ENCODE measurements at regions of chr4 and their contacts with region 1.

Region 1: GRCh38 chr4:37873386-37873785 is 17.5 kb upstream of the TBC1D1 start:
- DNase-seq: no peak
- H3K4me3 Mint-ChIP-seq: no peak overlapping the region
- H3K27ac Mint-ChIP-seq: no peak overlapping the region
- H3K4me1 Mint-ChIP-seq: peaks cover 14% of the 10 kb centered on the region
- H3K27me3 Mint-ChIP-seq: no peaks in the 10 kb centered on the region

Region 2: DNA sequence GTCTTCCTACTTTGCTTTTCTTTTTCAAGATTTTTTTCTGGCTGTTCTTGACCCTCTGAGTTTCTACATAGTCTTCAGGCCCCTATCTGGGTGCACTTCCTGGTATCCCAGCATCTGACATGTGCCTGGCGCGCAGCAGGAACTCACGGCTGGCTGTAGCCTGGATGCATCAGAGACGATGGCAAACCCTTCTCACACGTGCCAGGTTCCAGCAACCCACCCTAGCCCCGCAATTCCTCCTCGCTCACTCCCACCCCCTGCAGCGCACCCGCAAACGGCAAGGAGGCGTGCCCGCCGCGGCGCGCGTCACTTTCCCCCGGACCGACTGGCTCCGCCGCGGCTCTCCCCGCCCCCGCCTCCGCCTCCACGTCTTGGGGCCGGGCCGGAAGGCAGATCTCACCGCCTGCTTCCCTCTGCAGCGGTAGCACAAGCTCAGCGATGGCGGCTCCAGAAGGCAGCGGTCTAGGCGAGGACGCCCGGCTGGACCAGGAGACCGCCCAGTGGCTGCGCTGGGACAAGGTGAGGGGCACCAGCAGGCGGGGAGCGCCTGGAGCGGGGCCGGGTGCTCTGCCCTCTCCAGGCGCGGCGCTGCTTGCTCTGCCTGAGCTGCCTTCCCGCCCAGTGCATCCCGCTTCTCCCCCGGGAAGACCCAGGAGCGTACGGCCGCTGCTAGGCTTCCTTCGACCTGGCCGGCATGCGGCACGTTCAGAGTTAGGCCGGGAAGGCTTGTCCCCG is 46.9 kb before region 1 on chr4 and contains the start of gene PGM2:
- intact Hi-C with region 1: loop called (anchors 5 kb)
- DNase-seq: peak; percentile 98
- H3K4me3 Mint-ChIP-seq: peak within 1 kb of the TSS; percentile 95
- H3K27ac Mint-ChIP-seq: peak within 1 kb of the TSS; percentile 91
- H3K4me1 Mint-ChIP-seq: peaks cover 32% of the 10 kb centered on the region
- H3K27me3 Mint-ChIP-seq: peaks cover 1% of the 10 kb centered on the region
- total RNA-seq, gene PGM2: 53.4 and 55.1 TPM in 2 replicates

Region 3: GRCh38 chr4:38034986-38035882 is 161.8 kb after region 1 on chr4:
- intact Hi-C with region 1: no loop called
- DNase-seq: peak; percentile 82
- H3K4me3 Mint-ChIP-seq: no peak overlapping the region
- H3K27ac Mint-ChIP-seq: no peak overlapping the region
- H3K4me1 Mint-ChIP-seq: no peaks in the 10 kb centered on the region
- H3K27me3 Mint-ChIP-seq: no peaks in the 10 kb centered on the region

Region 4: GRCh38 chr4:38105475-38106220 is 232.3 kb after region 1 on chr4:
- intact Hi-C with region 1: no loop called
- DNase-seq: no peak
- H3K4me3 Mint-ChIP-seq: no peak overlapping the region
- H3K27ac Mint-ChIP-seq: no peak overlapping the region
- H3K4me1 Mint-ChIP-seq: peaks cover 10% of the 10 kb centered on the region
- H3K27me3 Mint-ChIP-seq: no peaks in the 10 kb centered on the region

Measured in activated CD4-positive, alpha-beta T cell treated with anti-CD3 and anti-CD28 coated beads, Interleukin-2, amount 10 ng/mL, durations not matched to agents 24 days and 14 days (primary cell).